ENCODE measurements at regions of chr21 and their contacts with region 1.

Region 1: GRCh38 chr21:42724226-42724920 is 71.0 kb downstream of the PDE9A start:
- DNase-seq: no peak
- ATAC-seq: peak; percentile 27

Region 2: GRCh38 chr21:42652527-42653230 is 71.7 kb before region 1 on chr21:
- intact Hi-C with region 1: no loop called
- DNase-seq: no peak
- ATAC-seq: peak; percentile 73

Region 3: DNA sequence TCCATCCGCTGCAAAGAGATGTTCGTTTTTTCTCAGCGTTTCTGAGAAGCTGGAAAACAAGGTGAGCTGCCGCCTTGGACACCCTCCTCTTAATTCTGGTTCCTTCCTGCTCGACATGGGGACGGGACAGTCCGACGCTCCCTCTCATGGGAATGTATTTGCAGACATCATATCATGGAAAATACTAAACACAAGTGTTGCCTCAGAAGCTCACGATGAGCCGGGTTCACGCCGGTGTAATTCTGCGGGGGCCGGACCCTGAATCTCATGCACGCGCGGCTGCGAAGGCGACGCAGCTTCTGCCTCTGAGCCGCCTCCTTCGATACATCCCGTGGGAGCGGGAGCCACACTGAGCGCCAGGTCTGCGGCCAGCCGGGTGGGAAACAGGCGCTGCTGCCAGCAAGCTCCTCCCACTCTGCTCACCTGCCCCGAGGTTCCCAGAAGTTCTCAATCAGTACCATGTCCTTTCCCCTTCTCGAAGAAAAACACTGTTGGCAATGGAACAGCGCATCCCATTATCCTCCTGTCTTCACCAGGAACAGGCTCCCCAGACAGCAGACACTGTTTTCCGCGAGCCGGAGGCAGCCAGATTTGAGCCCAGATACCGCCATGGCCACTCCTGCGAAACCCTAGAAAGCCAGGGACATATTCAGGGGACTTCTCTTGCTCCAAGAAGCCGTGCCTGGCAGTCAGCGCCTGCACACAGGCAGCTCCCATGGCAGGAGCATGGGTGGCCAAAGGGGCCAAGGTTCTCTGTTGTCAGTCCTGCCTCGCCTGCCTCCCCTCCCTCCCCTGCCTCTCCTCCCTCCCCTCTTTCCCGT is 57.0 kb after region 1 on chr21:
- intact Hi-C with region 1: loop called (anchors 1 kb)
- DNase-seq: no peak
- ATAC-seq: no peak

Region 4: GRCh38 chr21:42892931-42893755 is 168.8 kb after region 1 on chr21 and contains the start of gene NDUFV3:
- intact Hi-C with region 1: no loop called
- DNase-seq: peak; percentile 100
- ATAC-seq: peak; percentile 98
- total RNA-seq, gene NDUFV3: 61.0 TPM

Measured in Right ventricle myocardium inferior (tissue), 1 donor.